Tibial artery (tissue), 4 donors: ENCODE measurements at regions of chr3 and their contacts with region 1.

Region 1: DNA sequence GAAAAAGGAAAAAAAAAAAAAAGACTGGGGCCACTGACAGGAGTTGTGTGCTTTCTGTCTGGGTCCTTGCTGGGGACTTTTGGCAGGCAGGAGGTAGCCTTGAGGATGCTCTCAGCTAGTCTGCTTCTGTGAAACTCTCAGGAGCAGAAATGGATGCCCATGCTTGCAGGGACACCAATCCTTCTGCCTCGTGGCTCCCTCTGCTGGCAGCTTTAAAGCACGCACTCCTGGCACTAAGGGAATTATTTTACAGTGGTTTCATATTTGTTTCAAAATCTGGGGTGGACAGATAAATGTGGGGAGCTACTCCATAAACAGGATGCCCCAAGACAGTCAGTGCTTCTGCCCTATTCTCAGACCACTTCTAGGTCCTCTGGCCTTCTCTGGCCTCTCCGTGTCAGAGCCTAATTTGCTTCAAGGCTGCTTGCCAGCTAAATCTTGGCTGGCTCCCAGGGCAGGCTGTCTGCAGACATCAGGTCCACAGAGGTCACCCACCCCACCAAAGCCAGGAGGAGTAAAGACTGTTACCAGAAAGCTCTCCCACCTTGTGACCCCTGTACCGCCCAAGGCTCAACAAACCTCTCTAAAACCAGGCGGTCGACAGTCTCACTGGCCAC is 17.1 kb downstream of the TRAIP start:
- DNase-seq: peak; percentile 85 to 86
- H3K4me3 ChIP-seq: no peak overlapping the region
- H3K27ac ChIP-seq: no peak overlapping the region
- H3K4me1 ChIP-seq: peaks cover 0 to 7% (median 1%) of the 10 kb centered on the region in 4 donors
- H3K27me3 ChIP-seq: no peaks in the 10 kb centered on the region
- CTCF ChIP-seq: peak; percentile 88 to 95

Region 2: GRCh38 chr3:49802719-49803464 is 36.4 kb before region 1 on chr3 and contains the start of gene INKA1:
- intact Hi-C with region 1: loop called (anchors 1 kb)
- DNase-seq: peak; percentile 85 to 94
- H3K4me3 ChIP-seq: peak within 1 kb of the TSS; percentile 79 to 92
- H3K27ac ChIP-seq: peak within 1 kb of the TSS; percentile 87 to 98
- H3K4me1 ChIP-seq: peaks cover 22 to 48% (median 42%) of the 10 kb centered on the region in 4 donors
- H3K27me3 ChIP-seq: no peaks in the 10 kb centered on the region
- CTCF ChIP-seq: peak; percentile 91 to 94

Region 3: DNA sequence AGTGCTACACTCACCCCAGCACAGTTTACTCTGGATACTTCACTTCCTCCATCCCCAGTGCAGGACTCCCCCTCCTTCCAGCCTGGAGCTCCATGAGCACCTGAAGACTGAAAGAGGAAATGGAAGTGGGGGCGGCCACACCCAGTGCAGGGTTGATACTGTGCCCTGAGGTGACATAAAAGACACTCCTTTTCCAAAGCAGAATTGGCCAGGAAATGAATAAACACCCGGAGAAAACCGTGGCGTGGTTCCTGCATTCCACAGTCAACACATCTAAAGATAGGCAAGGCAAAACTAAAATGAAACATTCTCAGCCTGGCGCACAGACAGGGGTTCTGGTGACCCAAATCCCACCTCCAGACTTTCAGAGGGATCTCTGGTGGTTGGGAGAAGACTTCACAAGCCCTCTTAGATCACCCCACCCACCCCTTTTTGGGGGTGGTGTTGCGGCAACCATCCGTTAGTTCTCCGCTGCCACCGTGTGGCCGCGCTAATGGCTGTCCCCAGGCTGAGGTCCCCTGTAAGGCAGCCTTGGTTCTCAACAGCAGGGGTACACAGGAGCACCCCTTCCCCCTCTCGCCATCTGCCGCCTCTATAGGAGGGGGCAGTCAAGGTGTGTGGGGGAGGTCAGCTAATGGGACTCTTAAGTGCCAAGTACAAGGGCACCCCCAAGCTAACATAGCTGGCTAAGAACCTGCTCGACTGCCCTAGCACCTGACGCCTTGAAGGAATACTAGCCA is 66.9 kb after region 1 on chr3:
- intact Hi-C with region 1: loop called (anchors 10 kb)
- DNase-seq: peak in 1 of 2 donors; percentile 33
- H3K4me3 ChIP-seq: peak overlapping the region; percentile 26 to 42
- H3K27ac ChIP-seq: peak overlapping the region; percentile 54
- H3K4me1 ChIP-seq: peaks cover 0 to 47% (median 18%) of the 10 kb centered on the region in 4 donors
- H3K27me3 ChIP-seq: no peaks in the 10 kb centered on the region
- CTCF ChIP-seq: peak; percentile 56 to 68